Calu3 (cell line): ENCODE measurements at regions of chr5 and their contacts with region 1.

Region 1: GRCh38 chr5:147303976-147304375 is 69.2 kb downstream of the STK32A start:
- DNase-seq: peak; percentile 52
- H3K4me3 Mint-ChIP-seq: peak overlapping the region; percentile 29
- H3K27ac Mint-ChIP-seq: peak overlapping the region; percentile 84
- H3K4me1 Mint-ChIP-seq: peaks cover 46% of the 10 kb centered on the region
- H3K27me3 Mint-ChIP-seq: no peaks in the 10 kb centered on the region
- CTCF ChIP-seq: no peak

Region 2: DNA sequence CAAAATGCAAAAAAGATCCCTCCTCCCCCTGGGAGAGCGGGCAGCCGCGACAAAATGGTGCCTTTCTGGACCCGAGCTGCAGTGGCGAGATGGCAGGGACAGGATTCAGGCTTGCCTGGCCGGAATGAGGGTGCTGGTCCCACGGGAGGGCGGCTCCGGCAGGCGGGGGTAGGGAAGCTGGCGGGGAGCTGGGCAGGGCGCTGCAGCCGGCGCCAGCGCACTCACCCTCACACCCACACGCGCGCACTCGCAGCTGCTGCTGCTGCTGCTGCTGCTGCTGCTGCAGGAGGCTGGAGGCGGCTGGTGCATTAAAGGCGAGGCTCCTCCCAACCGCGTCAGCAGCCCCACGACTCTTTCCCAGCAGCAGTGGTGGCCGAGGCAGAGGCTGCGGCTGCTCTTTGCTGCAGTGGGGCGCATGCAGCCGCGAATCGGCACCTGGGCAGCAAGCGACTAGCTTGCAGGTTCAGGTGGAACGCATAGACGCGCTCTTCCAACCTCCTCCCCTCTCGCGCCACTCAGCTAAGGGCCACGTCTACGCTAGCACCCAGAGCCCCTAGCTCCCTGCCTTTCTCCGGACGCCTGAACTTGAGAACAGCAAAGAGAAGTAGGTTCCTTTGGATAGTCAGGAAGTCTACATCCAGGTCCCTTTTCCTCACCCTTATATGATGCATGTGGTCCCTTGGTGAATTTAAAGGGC is 425.4 kb before region 1 on chr5 and contains the start of gene PPP2R2B:
- CTCF ChIA-PET with region 1: no interaction called
- intact Hi-C with region 1: no loop called
- DNase-seq: peak; percentile 51
- H3K4me3 Mint-ChIP-seq: peak within 1 kb of the TSS; percentile 71
- H3K27ac Mint-ChIP-seq: no peak within 1 kb of the TSS
- H3K4me1 Mint-ChIP-seq: no peaks in the 10 kb centered on the region
- H3K27me3 Mint-ChIP-seq: peaks cover 63% of the 10 kb centered on the region
- CTCF ChIP-seq: no peak
- total RNA-seq, gene PPP2R2B: 1.2 TPM in 1 of 2 replicates, not detected in the other

Region 3: DNA sequence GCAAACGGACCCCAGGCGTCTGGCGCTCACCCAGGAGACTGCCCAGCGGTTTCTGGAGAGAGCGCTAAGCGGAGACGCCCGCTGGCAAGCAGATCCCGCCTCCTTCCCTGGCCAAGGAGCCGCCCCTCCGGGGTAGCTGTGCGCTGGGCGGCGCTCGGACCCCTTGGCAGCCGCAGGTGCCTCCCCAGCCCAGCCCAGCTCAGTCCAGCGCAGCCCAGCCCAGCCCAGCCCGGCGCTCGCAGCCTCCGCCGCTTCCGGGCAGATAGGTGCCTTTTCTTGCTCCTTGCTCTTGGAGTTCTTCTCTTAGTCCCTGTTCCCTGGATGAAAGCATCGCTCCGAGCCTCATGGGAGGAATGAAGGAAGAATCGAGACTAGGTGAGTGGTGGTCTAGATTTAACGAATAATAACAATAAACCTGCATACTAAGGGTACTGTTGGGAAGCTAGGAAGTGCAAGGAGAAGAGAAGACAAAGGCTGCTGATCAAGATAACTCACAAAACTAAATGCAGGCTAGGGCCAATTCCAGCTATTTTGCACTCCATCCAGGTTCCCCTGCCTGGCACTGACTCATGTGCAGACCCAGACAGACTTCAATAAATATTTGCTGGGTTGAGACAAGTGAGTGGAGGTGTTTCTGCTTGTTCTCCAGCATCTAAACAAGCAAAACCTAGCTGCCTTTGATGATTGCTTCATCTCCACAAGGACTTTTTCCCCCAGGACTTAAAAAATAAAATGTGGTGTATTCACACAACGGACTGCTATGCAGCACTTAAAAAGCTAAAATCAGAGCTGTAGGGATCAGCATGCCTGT is 68.9 kb before region 1 on chr5 and contains the start of gene STK32A:
- CTCF ChIA-PET with region 1: interaction called, 5 read pairs
- intact Hi-C with region 1: loop called (anchors 1 kb)
- DNase-seq: peak; percentile 93
- H3K4me3 Mint-ChIP-seq: peak within 1 kb of the TSS; percentile 89
- H3K27ac Mint-ChIP-seq: peak within 1 kb of the TSS; percentile 72
- H3K4me1 Mint-ChIP-seq: peaks cover 28% of the 10 kb centered on the region
- H3K27me3 Mint-ChIP-seq: no peaks in the 10 kb centered on the region
- CTCF ChIP-seq: no peak
- total RNA-seq, gene STK32A: 29.5 and 32.5 TPM in 2 replicates

Region 4: GRCh38 chr5:147361441-147362175 is 57.6 kb after region 1 on chr5:
- CTCF ChIA-PET with region 1: no interaction called
- intact Hi-C with region 1: loop called (anchors 2 kb)
- DNase-seq: peak; percentile 5
- H3K4me3 Mint-ChIP-seq: no peak overlapping the region
- H3K27ac Mint-ChIP-seq: no peak overlapping the region
- H3K4me1 Mint-ChIP-seq: peaks cover 51% of the 10 kb centered on the region
- H3K27me3 Mint-ChIP-seq: no peaks in the 10 kb centered on the region
- CTCF ChIP-seq: no peak